Esophagus squamous epithelium (tissue), 5 donors: ENCODE measurements at regions of chr3 and their contacts with region 1.

Region 1: DNA sequence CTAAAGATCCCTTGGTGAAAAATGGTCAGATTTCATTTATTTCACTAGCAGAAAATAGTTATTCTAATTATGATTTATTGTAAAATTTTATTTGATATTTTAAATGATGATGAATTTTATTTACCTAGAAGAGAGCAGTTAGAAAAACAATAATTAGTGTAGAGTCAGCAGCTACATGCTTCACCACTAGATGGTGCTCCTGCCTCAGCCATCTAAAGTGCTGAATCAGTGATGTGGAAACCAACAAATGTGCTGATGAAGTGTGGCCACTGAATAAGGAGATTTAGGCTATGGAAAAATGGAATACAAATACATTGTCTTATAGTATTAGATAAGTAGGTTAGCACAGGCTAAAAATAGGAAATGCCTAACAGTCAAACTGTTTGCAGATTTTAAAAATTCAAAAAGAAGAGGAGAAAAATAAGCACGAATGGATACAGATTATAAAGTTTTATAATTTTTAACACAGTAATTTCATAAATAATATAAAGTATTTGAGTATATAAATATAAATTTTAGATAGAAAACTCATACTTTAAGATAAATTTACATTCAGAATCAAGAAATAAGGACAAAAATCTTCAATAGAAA is 109.8 kb downstream of the PPP2R3A start:
- DNase-seq: no peak
- H3K4me3 ChIP-seq: no peak overlapping the region
- H3K27ac ChIP-seq: no peak overlapping the region
- H3K4me1 ChIP-seq: peaks cover 0 to 15% (median 0%) of the 10 kb centered on the region in 3 donors
- H3K27me3 ChIP-seq: no peaks in the 10 kb centered on the region
- CTCF ChIP-seq: peak; percentile 82 to 96 (median 94)
- POLR2A ChIP-seq: no peak

Region 2: DNA sequence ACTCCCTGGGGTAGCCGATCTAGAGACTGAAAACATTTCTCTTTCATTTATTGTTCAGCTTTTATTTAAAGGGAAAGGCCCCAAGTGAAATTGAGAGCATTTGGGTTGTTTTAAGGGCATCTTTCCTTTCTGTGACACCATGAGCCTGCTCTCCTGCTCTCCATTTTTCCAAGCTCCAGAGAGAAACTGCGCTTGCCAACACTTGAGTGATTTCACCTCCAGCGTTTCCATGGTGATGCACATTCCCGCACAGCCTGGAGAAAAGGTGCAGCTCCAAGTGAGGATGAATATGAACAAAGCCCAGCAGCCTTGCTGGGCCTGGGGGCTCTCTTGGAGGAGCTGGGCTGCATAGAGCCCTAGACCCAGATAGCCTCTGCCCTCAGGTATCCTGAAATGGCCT is 269.0 kb before region 1 on chr3:
- intact Hi-C with region 1: no loop called
- DNase-seq: no peak
- H3K4me3 ChIP-seq: no peak overlapping the region
- H3K27ac ChIP-seq: no peak overlapping the region
- H3K4me1 ChIP-seq: no peaks in the 10 kb centered on the region
- H3K27me3 ChIP-seq: peaks cover 0 to 19% (median 0%) of the 10 kb centered on the region in 4 donors
- CTCF ChIP-seq: no peak
- POLR2A ChIP-seq: no peak

Region 3: DNA sequence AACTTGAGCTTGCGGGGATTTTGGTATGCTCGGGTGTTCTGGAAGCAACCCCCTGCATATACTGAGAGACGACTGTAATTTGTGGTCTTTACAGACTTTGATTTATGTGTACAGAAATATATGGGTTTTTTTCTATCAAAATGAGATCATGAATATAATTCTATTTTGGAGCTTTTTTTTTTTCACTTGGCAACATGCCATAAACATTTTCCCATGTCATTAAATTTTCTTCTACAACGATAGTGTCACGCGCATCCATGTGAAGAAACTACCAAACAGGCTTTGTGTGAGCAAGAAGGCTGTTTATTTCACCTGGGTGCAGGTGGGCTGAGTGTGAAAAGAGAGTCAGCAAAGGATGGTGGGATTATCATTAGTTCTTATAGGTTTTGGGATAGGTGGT is 141.9 kb after region 1 on chr3:
- intact Hi-C with region 1: no loop called
- DNase-seq: no peak
- H3K4me3 ChIP-seq: no peak overlapping the region
- H3K27ac ChIP-seq: no peak overlapping the region
- H3K4me1 ChIP-seq: no peaks in the 10 kb centered on the region
- H3K27me3 ChIP-seq: no peaks in the 10 kb centered on the region
- CTCF ChIP-seq: no peak
- POLR2A ChIP-seq: no peak

Region 4: DNA sequence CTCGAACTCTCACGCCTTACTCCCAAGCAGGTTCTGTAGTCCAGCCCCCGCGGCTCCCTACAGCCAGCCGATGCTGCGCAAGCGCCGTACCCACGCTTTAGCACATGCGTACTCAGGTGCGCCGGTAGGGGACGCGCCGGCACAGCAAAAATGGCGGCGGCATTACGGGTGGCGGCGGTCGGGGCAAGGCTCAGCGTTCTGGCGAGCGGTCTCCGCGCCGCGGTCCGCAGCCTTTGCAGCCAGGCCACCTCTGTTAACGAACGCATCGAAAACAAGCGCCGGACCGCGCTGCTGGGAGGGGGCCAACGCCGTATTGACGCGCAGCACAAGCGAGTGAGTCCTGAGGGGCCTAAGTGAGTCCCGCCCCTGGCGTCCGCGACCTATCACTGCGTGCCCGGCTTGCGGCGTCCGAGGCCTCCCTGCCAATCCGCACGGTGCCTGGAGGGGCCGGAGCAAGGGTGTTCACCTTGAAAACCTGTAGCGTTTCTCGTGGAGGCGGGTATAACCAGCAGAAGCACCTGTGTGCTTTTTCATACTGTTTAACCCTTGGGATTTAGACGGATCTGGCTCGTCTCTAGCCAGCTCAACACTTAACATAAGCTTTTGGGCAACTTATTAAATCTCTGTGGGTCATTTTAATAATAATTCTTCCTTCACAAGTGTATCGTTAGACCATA is 175.1 kb after region 1 on chr3 and contains the start of gene PCCB:
- intact Hi-C with region 1: loop called (anchors 5 kb)
- DNase-seq: peak; percentile 88
- H3K4me3 ChIP-seq: peak within 1 kb of the TSS; percentile 65 to 93 (median 80)
- H3K27ac ChIP-seq: peak within 1 kb of the TSS; percentile 89 to 98 (median 94)
- H3K4me1 ChIP-seq: peaks cover 10 to 22% (median 15%) of the 10 kb centered on the region in 3 donors
- H3K27me3 ChIP-seq: no peaks in the 10 kb centered on the region
- CTCF ChIP-seq: peak; percentile 73 to 93 (median 84)
- POLR2A ChIP-seq: peak in 2 of 4 donors; percentile 24 to 62
- total RNA-seq, gene PCCB: 30.7 to 43.5 (median 38.0) TPM

Region 5: GRCh38 chr3:136749091-136749490 is 673.8 kb after region 1 on chr3:
- intact Hi-C with region 1: loop called (anchors 5 kb)
- DNase-seq: no peak
- H3K4me3 ChIP-seq: no peak overlapping the region
- H3K27ac ChIP-seq: peak overlapping the region in 3 of 4 donors; percentile 7 to 100 (median 98)
- H3K4me1 ChIP-seq: peaks cover 4 to 68% (median 30%) of the 10 kb centered on the region in 3 donors
- H3K27me3 ChIP-seq: no peaks in the 10 kb centered on the region
- CTCF ChIP-seq: no peak
- POLR2A ChIP-seq: no peak